HepG2 (cell line): ENCODE measurements at regions of chr19 and their contacts with region 1.

Region 1: DNA sequence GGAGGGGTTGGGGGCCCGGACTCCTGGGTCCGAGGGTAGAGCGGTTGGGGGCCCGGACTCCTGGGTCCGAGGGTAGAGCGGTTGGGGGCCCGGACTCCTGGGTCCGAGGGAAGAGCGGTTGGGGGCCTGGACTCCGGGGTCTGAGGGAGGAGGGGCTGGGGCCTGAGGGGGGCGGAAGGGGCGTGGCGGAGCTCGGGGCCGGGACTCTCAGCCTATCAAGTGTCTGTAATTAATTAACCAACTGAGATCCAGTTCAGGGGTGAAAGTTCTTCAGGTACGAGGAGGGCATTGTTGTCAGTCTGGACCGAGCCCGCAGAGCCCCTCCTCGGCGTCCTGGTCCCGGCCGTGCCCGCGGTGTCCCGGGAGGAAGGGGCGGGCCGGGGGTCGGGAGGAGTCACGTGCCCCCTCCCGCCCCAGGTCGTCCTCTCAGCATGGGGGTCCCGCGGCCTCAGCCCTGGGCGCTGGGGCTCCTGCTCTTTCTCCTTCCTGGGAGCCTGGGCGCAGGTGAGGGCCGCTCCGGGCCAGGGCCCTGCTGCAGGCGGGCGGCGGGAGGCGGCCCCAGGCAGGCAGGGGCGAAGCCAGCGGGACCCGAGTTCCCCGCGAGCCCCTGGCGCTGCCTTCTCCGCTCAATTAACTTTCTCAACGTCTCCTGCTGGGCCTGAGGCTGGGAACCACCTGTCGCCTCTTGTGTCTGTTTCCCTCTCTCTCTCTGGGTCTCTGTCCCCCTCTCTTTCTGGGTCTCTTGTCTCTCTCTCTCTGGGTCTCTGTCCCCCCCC is 697 bp downstream of the FCGRT start:
- DNase-seq: peak; percentile 89
- ATAC-seq: peak; percentile 87
- H3K4me3 ChIP-seq: peak overlapping the region; percentile 75 to 89 (median 76)
- H3K27ac ChIP-seq: peak overlapping the region; percentile 89
- H3K4me1 ChIP-seq: peaks cover 38% of the 10 kb centered on the region
- H3K27me3 ChIP-seq: no peaks in the 10 kb centered on the region
- CTCF ChIP-seq: no peak
- EP300 ChIP-seq: peak in 1 of 2 experiments; percentile 11; a peak in 1 of 4 replicates
- POLR2A ChIP-seq: peak; percentile 91 to 97
- RAD21 ChIP-seq: 0 out of 2 replicates have a peak, but pooled peaks have one; percentile 20

Region 2: DNA sequence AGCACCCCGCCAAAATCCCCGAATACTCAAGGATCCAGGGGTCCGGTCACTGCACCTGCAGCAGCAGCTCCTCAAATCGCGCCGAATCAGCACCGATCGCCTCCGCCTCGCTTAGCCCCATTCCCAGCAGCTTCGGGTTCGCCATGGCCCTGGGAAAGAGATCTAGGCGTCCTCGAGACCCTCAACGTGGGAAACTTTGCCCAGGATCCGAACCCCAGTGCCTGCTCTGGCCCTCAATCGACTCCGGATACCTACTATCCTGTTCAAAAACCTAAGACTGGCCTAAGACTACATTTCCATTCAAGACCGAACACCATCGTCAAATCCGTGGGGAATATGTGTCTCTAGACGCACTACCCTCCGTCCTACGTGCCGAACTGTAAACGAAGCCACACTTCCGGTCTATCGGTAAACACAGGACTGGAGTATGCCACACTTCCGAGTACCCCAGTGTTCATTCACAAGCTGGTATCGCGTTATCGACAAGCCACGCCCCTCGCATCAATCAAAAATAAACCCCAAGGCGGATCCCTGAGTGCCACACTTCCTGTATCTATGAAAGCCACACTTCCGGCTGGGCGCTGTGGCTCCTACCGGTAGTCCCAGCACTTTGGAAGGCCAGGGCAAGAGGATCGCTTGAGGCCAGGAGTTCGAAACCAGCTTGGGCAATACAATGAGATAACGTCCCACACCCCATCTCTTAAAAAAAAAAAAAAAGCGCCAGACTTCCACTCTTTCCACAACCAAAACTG is 61.6 kb before region 1 on chr19 and contains the start of gene PIH1D1:
- CTCF ChIA-PET with region 1: no interaction called
- POLR2A ChIA-PET with region 1: interaction called, 13 read pairs
- in situ Hi-C with region 1: no loop called
- intact Hi-C with region 1: no loop called
- DNase-seq: peak; percentile 99
- ATAC-seq: peak; percentile 85
- H3K4me3 ChIP-seq: peak within 1 kb of the TSS; percentile 93 to 98 (median 95)
- H3K27ac ChIP-seq: peak within 1 kb of the TSS; percentile 99
- H3K4me1 ChIP-seq: peaks cover 35% of the 10 kb centered on the region
- H3K27me3 ChIP-seq: no peaks in the 10 kb centered on the region; a peak in 1 of 5 replicates
- CTCF ChIP-seq: peak; percentile 23; the same call in 1 of the 2 replicates
- EP300 ChIP-seq: no peak
- POLR2A ChIP-seq: peak; percentile 83 to 93
- RAD21 ChIP-seq: no peak
- total RNA-seq, gene PIH1D1: 94.9 and 110 TPM in 2 replicates

Region 3: DNA sequence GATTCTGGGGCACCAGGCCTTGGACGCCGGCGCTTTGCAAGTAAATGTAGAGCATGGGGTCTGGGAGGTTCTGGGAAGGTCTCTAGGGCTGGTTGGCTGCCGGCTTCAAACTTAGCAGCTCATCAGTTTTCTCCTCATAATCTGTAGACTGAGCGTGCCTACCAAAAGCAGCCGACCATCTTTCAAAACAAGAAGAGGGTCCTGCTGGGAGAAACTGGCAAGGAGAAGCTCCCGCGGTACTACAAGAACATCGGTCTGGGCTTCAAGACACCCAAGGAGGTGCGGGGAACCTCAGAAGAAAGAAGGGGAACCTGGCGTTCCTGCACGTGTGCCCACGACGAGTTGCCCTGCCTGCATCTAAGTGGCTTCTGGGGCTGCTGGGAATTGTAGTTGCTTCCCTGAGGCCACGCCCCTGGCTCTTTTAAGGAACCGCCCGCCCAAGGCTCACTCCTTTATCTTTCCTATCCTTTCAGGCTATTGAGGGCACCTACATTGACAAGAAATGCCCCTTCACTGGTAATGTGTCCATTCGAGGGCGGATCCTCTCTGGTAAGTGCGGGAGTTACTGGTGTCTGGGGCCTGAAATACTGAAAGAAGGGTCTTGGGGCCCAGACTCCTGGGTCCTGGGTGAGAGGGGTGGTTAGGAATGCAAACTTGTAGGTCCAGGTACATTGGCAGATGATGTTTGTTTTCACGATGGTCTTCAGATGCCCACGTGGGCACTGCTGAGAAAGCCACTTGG is 15.9 kb before region 1 on chr19:
- CTCF ChIA-PET with region 1: no interaction called
- POLR2A ChIA-PET with region 1: interaction called, 20 read pairs
- in situ Hi-C with region 1: no loop called
- intact Hi-C with region 1: no loop called
- DNase-seq: no peak
- ATAC-seq: no peak
- H3K4me3 ChIP-seq: peak overlapping the region; percentile 77 to 85 (median 78)
- H3K27ac ChIP-seq: peak overlapping the region; percentile 81
- H3K4me1 ChIP-seq: peaks cover 39% of the 10 kb centered on the region
- H3K27me3 ChIP-seq: peaks cover 0 to 4% of the 10 kb centered on the region in 2 experiments; a peak in 1 of 5 replicates
- CTCF ChIP-seq: no peak
- EP300 ChIP-seq: no peak
- POLR2A ChIP-seq: peak; percentile 66 to 71; a peak in 3 of 4 replicates
- RAD21 ChIP-seq: no peak

Region 4: DNA sequence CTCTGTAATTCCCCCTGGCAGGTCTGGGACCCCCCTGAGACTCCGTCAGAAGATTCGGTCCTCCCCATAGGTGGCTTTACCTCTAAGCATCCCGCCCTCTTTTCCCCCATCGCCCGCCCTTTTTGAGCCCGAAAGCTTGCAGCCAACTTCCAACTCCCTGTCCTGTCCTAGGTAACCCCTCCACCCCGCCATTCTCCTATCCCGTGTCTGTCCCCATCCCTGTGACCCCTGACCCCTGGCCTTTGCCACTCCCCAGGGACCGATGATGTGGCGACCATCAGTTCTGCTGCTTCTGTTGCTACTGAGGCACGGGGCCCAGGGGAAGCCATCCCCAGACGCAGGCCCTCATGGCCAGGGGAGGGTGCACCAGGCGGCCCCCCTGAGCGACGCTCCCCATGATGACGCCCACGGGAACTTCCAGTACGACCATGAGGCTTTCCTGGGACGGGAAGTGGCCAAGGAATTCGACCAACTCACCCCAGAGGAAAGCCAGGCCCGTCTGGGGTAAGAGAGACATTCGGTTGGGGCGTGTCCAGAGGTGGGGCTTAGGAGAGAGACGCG is 15.1 kb after region 1 on chr19:
- CTCF ChIA-PET with region 1: no interaction called
- POLR2A ChIA-PET with region 1: interaction called, 12 read pairs
- in situ Hi-C with region 1: no loop called
- intact Hi-C with region 1: no loop called
- DNase-seq: no peak
- ATAC-seq: no peak
- H3K4me3 ChIP-seq: no peak overlapping the region
- H3K27ac ChIP-seq: no peak overlapping the region
- H3K4me1 ChIP-seq: no peaks in the 10 kb centered on the region
- H3K27me3 ChIP-seq: no peaks in the 10 kb centered on the region
- CTCF ChIP-seq: no peak
- EP300 ChIP-seq: no peak
- POLR2A ChIP-seq: no peak
- RAD21 ChIP-seq: no peak

Region 5: DNA sequence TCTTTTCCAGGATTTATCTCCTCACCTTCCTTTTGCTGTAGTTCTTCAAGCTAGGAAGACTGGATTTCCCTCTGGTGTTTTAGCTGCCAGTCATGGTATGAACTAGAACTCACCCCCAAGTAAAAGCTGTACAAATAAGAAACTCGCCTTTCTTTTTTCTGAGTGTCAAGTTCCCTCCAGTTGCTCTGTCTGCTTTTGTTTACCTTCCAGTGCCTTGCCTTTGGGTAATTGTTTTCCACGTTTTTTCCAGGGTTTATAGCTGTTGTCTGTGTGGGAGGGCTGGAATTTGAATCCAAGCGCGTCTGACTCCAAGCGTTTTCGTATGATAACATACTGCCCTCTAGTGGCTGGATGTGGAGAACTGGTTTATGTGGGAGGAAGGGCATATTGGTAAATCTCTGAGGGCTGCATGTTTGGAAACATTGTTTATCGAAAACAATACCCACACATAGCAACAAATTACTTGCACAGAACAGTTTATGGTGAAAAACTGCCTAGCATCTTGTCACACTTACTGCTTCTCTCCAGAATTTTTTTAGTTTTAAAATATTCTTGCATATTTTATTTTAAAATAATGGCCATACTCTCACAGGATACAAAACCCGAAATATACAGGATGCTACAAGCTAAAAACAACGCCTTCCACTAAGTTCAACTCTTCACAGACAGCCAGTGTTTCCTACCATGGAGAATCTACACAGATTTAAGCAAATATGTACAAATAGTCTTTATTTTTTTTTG is 33.8 kb after region 1 on chr19:
- CTCF ChIA-PET with region 1: no interaction called
- POLR2A ChIA-PET with region 1: interaction called, 29 read pairs
- in situ Hi-C with region 1: loop called (anchors 5 kb)
- intact Hi-C with region 1: no loop called
- DNase-seq: peak; percentile 85
- ATAC-seq: peak; percentile 77
- H3K4me3 ChIP-seq: no peak overlapping the region
- H3K27ac ChIP-seq: peak overlapping the region; percentile 44
- H3K4me1 ChIP-seq: peaks cover 5% of the 10 kb centered on the region
- H3K27me3 ChIP-seq: no peaks in the 10 kb centered on the region
- CTCF ChIP-seq: peak; percentile 90
- EP300 ChIP-seq: no peak
- POLR2A ChIP-seq: no peak
- RAD21 ChIP-seq: peak; percentile 79

Region 6: DNA sequence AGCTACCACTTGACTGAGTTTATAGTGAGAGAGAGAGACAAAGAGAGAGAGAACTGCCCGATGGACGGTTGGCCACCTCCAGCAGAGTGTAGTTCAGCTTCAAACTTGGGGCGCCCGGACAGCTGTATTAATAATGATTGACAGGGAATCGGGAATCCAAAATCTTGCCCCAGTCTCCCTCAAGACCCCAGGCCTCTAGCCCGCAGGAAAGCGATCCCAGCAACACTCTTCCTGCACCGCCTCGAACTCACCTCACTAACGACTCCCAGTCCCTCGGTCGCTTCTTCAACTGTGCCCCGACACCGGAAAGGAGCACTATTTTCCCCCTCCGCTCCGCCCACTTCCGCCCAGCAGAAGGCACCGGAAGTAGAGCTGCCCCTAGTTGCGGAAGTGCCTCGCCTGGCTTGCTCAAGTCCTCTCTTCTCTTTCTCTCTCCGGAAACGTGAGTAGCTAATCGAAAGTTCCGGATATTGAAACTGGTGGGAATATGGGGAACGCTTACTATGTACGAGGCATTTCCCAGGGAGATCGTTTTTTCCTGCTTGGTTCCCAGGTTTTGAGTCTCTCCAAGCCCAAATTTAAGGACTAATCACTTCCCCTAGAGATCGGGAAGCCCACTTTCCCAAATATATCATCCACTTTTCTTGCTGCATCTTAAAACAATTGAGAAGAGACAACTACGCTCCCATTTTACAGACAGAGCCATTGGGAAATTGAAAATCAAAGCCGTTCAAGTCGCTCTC is 67.3 kb after region 1 on chr19 and contains the start of gene NOSIP:
- CTCF ChIA-PET with region 1: no interaction called
- POLR2A ChIA-PET with region 1: interaction called, 12 read pairs
- in situ Hi-C with region 1: no loop called
- intact Hi-C with region 1: no loop called
- DNase-seq: peak; percentile 93
- ATAC-seq: peak; percentile 94
- H3K4me3 ChIP-seq: peak within 1 kb of the TSS; percentile 75 to 94 (median 88)
- H3K27ac ChIP-seq: peak within 1 kb of the TSS; percentile 61
- H3K4me1 ChIP-seq: peaks cover 35% of the 10 kb centered on the region
- H3K27me3 ChIP-seq: peaks cover 0 to 5% of the 10 kb centered on the region in 2 experiments; a peak in 1 of 5 replicates
- CTCF ChIP-seq: no peak; the same call in 1 of the 2 replicates
- EP300 ChIP-seq: peak; percentile 27 to 57; a peak in 1 of 4 replicates
- POLR2A ChIP-seq: peak; percentile 99 to 100
- RAD21 ChIP-seq: peak; percentile 28; the same call in 1 of the 2 replicates
- total RNA-seq, gene NOSIP: 78.0 and 81.4 TPM in 2 replicates

Region 7: DNA sequence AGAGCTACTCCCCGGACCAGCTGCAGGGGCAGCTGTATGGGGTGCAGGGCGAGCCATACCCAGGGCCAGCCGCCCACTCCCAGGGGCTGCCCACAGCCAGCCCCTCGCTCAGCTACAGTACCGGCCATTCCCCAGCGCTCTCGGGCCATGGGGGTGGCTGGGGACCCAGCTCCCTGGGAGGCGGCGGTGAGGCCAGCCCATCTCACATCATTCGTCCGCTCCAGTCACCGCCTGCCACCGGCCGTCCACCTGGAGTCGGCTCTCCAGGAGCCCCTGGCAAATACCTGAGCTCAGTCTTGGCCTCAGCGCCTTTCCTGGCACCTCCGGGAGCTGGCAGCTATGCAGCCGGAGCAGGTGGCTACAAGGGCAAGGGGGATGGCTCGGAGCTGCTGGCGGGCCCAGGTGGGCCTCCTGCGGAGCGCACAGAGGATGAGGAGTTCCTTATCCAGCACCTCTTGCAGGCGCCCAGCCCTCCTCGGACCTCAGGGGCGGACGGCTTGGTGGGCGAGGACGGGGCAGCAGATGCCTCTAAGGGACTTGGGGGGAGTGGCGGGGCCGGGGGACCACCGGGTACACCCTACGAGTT is 82.8 kb after region 1 on chr19:
- CTCF ChIA-PET with region 1: no interaction called
- POLR2A ChIA-PET with region 1: no interaction called
- in situ Hi-C with region 1: no loop called
- intact Hi-C with region 1: no loop called
- DNase-seq: no peak
- ATAC-seq: no peak
- H3K4me3 ChIP-seq: no peak overlapping the region
- H3K27ac ChIP-seq: no peak overlapping the region
- H3K4me1 ChIP-seq: peaks cover 16% of the 10 kb centered on the region
- H3K27me3 ChIP-seq: no peaks in the 10 kb centered on the region
- CTCF ChIP-seq: no peak
- EP300 ChIP-seq: no peak
- POLR2A ChIP-seq: no peak
- RAD21 ChIP-seq: no peak